GM10248 (cell line): ENCODE measurements at regions of chr5 and their contacts with region 1.

Region 1: DNA sequence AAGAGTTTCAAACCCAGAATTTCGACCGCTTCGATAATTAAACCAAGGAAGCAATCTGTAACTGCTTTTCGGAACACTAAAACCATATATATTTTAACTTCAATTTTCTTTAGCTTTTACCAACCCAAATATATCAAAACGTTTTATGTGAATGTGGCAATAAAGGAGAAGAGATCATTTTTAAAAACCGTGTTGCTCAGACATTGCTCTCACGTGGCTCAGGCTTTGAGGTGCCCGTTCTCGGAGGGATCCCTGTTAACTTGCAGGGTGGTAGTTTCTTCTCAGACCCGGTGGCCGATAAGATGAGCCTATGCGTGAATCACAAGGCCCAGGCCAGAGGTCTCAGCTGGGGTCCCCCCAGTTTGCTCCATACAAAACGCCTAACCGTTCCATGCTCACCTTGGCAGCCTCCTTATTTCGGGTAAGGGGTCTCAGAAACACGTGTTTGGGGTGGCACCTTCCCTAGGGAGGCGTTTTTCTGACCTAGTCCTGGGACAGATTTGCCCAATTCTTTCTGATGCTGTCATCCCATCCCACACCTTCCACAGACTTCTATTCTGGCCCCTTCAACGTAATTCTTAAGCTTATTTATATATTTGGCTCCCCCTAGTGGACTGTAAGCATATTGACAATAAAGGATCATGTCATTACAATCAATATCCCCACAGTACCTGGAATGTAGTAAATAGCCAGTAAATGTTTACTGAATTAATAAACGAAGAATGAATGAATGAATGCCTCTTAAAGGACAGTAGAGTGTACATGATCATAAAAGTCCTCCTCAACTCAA is 48.1 kb downstream of the THBS4 start:
- DNase-seq: peak; percentile 73
- CTCF ChIP-seq: peak; percentile 66

Region 2: GRCh38 chr5:78747705-78748359 is 1335.5 kb before region 1 on chr5:
- CTCF ChIA-PET with region 1: no interaction called
- POLR2A ChIA-PET with region 1: no interaction called
- DNase-seq: no peak
- CTCF ChIP-seq: no peak

Region 3: DNA sequence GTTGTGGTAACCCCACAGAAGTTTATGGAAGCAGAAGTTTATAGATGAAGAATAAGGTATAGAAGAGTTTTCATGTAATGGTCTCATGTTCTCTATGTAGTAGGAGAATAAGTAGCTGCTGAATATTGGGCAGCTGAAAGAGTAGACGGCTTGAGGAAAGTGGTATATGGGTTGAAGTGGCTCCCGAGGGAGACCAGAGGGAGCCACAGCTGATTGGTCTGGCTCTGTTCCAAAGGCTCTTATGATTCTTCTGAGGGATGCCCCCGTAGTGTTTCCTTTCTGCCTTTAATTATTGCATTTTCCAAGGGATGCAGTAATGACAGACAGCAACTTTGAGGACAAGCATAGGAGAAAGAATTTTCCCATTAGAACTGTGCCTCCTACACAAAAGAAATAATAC is 501.1 kb before region 1 on chr5:
- CTCF ChIA-PET with region 1: no interaction called
- POLR2A ChIA-PET with region 1: no interaction called
- DNase-seq: no peak
- CTCF ChIP-seq: no peak

Region 4: DNA sequence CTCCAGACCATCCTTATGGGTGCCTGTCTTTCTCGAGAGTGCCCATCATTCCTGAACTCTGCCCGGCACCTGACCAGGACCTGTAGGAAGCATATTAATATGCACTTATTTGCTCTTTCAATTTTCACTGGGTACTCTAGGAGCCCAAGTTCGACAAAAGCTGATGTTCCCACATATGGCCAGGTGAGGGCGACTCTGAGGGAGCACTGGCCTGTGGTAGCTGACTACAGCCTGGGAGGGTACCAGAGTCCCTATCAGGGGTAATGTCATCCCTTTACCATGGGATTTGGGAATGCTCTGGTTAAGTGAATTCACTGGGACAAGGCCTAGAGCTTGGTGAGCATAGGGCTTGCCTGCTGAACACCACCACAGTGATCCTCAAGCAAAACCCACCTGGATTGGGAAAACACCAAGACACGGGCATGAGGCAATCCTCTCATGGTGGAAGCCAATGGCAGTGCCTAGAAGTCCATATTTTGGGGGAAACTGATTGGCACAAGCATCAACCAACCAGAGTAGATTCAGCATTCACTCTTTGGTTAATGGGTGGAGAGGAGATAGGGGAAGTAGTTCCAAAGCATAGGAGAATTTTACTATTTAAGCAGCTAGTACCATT is 204.5 kb before region 1 on chr5:
- CTCF ChIA-PET with region 1: interaction called, 45 read pairs
- POLR2A ChIA-PET with region 1: no interaction called
- DNase-seq: peak; percentile 36
- CTCF ChIP-seq: peak; percentile 38

Region 5: DNA sequence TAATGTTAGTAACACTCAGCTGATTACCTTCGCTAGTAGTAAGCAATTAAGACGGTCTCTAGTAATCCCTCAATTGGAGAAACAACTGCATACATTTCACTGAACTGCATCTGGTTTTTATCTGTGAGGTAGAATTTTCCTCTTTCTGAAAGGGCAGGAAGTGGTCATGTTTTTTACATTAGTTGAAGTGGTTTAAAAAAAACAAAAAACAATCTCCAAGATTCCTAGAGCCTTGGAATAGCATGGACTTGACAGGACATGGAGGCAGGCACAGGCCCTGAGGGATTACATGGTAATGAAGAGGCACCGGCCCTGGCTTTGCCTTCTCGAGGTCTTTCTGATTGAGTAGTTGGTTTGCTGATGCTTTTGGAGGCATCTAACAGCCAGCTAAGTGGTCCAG is 22.3 kb before region 1 on chr5:
- CTCF ChIA-PET with region 1: interaction called, 17 read pairs
- POLR2A ChIA-PET with region 1: no interaction called
- DNase-seq: no peak
- CTCF ChIP-seq: no peak

Region 6: GRCh38 chr5:80093796-80094195 is 10.5 kb after region 1 on chr5:
- CTCF ChIA-PET with region 1: interaction called, 84 read pairs
- POLR2A ChIA-PET with region 1: no interaction called
- DNase-seq: no peak
- CTCF ChIP-seq: no peak

Region 7: GRCh38 chr5:80308526-80308925 is 225.2 kb after region 1 on chr5:
- CTCF ChIA-PET with region 1: interaction called, 124 read pairs
- POLR2A ChIA-PET with region 1: no interaction called
- DNase-seq: no peak
- CTCF ChIP-seq: no peak